ENCODE measurements at regions of chr3 and their contacts with region 1.

Region 1: GRCh38 chr3:58392181-58392580 is 41.5 kb downstream of the PDHB start:
- DNase-seq: no peak
- H3K4me3 ChIP-seq: peak overlapping the region in 1 of 3 donors; percentile 16
- H3K27ac ChIP-seq: no peak overlapping the region
- H3K4me1 ChIP-seq: no peaks in the 10 kb centered on the region
- H3K27me3 ChIP-seq: no peaks in the 10 kb centered on the region
- CTCF ChIP-seq: no peak
- POLR2A ChIP-seq: no peak

Region 2: GRCh38 chr3:57007513-57008460 is 1384.4 kb before region 1 on chr3:
- intact Hi-C with region 1: loop called (anchors 10 kb)
- DNase-seq: peak; percentile 66 to 72
- H3K4me3 ChIP-seq: peak overlapping the region in 2 of 3 donors; percentile 15 to 37
- H3K27ac ChIP-seq: peak overlapping the region; percentile 90 to 95
- H3K4me1 ChIP-seq: peaks cover 22 to 39% of the 10 kb centered on the region in 2 donors
- H3K27me3 ChIP-seq: no peaks in the 10 kb centered on the region
- CTCF ChIP-seq: peak in 1 of 3 donors; percentile 10
- POLR2A ChIP-seq: no peak

Measured in breast epithelium (tissue), 4 donors.